ENCODE measurements at regions of chr20 and their contacts with region 1.

Region 1: GRCh38 chr20:56343861-56344381 is 14.9 kb upstream of the FAM210B start:
- DNase-seq: peak; percentile 79 to 98
- H3K4me3 ChIP-seq: peak overlapping the region in 3 of 4 experiments; percentile 40 to 52 (median 48); a peak in 7 of 8 replicates
- H3K27ac ChIP-seq: no peak overlapping the region
- H3K4me1 ChIP-seq: peaks cover 0 to 6% (median 3%) of the 10 kb centered on the region in 4 experiments; a peak in 4 of 7 replicates
- H3K27me3 ChIP-seq: peaks cover 8 to 35% (median 25%) of the 10 kb centered on the region in 4 experiments
- CTCF ChIP-seq: peak; percentile 88 to 92 (median 90)
- EP300 ChIP-seq: 0 out of 3 replicates have a peak, but pooled peaks of 1 of the 2 experiments have one; percentile 26
- POLR2A ChIP-seq: no peak
- RAD21 ChIP-seq: peak; percentile 95 to 96

Region 2: GRCh38 chr20:56187534-56188198 is 156.3 kb before region 1 on chr20:
- CTCF ChIA-PET with region 1: interaction called, 10 read pairs
- POLR2A ChIA-PET with region 1: no interaction called
- DNase-seq: peak in 1 of 2 experiments; percentile 56
- H3K4me3 ChIP-seq: no peak overlapping the region
- H3K27ac ChIP-seq: no peak overlapping the region
- H3K4me1 ChIP-seq: no peaks in the 10 kb centered on the region
- H3K27me3 ChIP-seq: no peaks in the 10 kb centered on the region
- CTCF ChIP-seq: peak in 2 of 3 experiments; percentile 19 to 50; a peak in 1 of 4 replicates
- EP300 ChIP-seq: no peak
- POLR2A ChIP-seq: no peak
- RAD21 ChIP-seq: peak; percentile 29 to 57; a peak in 3 of 4 replicates

Region 3: DNA sequence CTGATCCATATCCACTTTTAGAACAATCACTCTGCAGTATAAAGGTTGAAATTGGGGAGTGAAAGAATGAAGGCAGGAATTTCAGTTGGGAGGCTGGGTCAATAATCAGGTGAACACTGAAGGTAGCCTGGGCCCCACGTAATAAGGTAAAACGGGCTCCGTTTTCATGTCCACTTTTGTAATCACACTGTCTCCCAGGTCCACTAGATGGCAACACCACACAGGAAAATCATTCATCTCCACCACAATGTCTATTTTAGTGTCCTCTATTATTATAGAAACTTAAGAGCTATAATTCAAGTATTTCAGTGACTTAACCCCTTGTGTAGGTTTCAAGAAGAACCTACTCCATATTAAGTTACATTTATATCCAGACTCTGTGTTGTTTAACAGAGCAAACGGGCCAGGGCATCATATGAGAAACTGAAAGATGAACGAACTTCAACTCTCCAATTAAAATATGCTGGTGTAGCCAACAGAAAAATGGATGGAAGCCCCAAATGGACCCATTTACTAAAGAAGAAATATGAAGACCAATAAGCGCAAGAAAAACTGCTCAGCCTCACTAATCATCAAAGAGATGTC is 141.3 kb before region 1 on chr20:
- CTCF ChIA-PET with region 1: interaction called, 15 read pairs
- POLR2A ChIA-PET with region 1: no interaction called
- DNase-seq: no peak
- H3K4me3 ChIP-seq: no peak overlapping the region
- H3K27ac ChIP-seq: no peak overlapping the region
- H3K4me1 ChIP-seq: no peaks in the 10 kb centered on the region; a peak in 1 of 7 replicates
- H3K27me3 ChIP-seq: no peaks in the 10 kb centered on the region
- CTCF ChIP-seq: peak in 2 of 3 experiments; percentile 28 to 36; a peak in 2 of 4 replicates
- EP300 ChIP-seq: no peak
- POLR2A ChIP-seq: no peak
- RAD21 ChIP-seq: peak; percentile 45 to 57

Region 4: DNA sequence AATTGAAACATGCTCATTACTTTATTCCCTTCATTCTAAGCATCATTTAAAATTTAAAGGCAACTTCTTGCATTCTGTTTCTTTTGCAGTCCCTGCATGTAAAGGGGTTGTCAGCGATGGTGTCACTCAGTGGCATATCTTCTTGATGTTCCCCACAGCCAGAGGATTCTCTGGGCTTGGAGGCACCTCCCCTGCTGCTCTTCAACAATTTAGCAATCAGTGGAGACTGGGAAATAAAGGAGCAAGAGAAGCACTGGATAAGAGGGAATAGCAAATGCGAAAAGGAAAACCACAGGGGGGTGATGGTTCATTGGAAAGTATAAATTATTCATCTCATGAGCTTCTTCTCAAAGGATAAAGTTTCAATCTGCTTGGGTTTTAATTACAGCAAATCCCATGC is 126.1 kb before region 1 on chr20:
- CTCF ChIA-PET with region 1: interaction called, 10 read pairs
- POLR2A ChIA-PET with region 1: no interaction called
- DNase-seq: no peak
- H3K4me3 ChIP-seq: no peak overlapping the region
- H3K27ac ChIP-seq: no peak overlapping the region
- H3K4me1 ChIP-seq: no peaks in the 10 kb centered on the region
- H3K27me3 ChIP-seq: no peaks in the 10 kb centered on the region
- CTCF ChIP-seq: no peak
- EP300 ChIP-seq: no peak
- POLR2A ChIP-seq: no peak
- RAD21 ChIP-seq: no peak

Region 5: DNA sequence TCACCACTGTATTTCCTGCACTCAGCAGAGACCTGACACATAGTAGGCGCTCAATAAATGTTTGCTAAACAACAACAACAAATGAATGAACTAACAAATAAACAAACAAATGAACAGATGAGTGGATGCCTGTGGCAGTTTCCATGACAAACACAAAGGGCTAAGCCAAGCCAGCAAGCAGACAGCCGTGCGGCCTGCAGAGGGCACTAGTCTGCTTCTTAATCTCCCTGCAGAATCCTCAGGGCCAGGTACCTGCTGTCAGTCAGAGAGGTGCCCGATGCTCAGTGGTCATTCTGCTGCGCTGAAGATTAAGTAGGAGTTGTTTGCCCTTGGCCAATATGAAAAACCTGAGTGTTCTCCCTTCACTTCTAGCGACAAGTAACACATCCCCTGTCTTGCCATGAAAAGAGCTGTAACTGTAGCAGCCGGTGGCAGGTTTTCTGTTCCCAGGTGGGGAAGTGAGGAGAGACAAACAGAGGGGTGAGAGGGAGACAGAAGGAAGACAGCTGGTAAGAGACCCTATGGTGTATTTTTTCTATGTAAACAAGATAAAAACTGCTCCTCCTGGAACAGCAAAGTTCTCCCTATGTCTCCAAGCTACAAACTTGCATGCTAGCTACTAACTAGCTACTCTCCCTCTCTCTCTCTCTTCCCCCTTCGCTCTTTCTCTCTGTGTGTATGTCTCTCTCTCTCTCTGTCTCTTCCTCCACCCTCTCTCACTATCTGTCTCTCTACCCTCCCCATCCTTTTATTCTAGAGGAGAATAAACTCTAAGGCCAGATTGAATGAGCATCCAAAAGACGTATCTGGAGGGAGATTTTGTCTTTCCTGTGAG is 95.8 kb before region 1 on chr20 and contains the start of gene MC3R:
- CTCF ChIA-PET with region 1: interaction called, 15 read pairs
- POLR2A ChIA-PET with region 1: no interaction called
- DNase-seq: peak; percentile 27 to 74
- H3K4me3 ChIP-seq: no peak within 1 kb of the TSS
- H3K27ac ChIP-seq: no peak within 1 kb of the TSS
- H3K4me1 ChIP-seq: no peaks in the 10 kb centered on the region
- H3K27me3 ChIP-seq: peaks cover 0 to 16% (median 7%) of the 10 kb centered on the region in 4 experiments; a peak in 3 of 7 replicates
- CTCF ChIP-seq: peak; percentile 68 to 89 (median 83)
- EP300 ChIP-seq: no peak
- POLR2A ChIP-seq: no peak
- RAD21 ChIP-seq: peak; percentile 59 to 62
- total RNA-seq, gene MC3R: not detected in 2 replicates

Region 6: GRCh38 chr20:56358596-56359211 is 14.8 kb after region 1 on chr20 and contains the start of gene FAM210B:
- CTCF ChIA-PET with region 1: interaction called, 20 read pairs
- POLR2A ChIA-PET with region 1: no interaction called
- DNase-seq: peak; percentile 72 to 84
- H3K4me3 ChIP-seq: peak within 1 kb of the TSS; percentile 65 to 94 (median 73)
- H3K27ac ChIP-seq: no peak within 1 kb of the TSS
- H3K4me1 ChIP-seq: peaks cover 4 to 11% (median 6%) of the 10 kb centered on the region in 4 experiments
- H3K27me3 ChIP-seq: peaks cover 0 to 11% (median 8%) of the 10 kb centered on the region in 4 experiments; a peak in 4 of 7 replicates
- CTCF ChIP-seq: no peak
- EP300 ChIP-seq: no peak
- POLR2A ChIP-seq: no peak
- RAD21 ChIP-seq: no peak
- total RNA-seq, gene FAM210B: 15.0 and 15.1 TPM in 2 replicates

Region 7: DNA sequence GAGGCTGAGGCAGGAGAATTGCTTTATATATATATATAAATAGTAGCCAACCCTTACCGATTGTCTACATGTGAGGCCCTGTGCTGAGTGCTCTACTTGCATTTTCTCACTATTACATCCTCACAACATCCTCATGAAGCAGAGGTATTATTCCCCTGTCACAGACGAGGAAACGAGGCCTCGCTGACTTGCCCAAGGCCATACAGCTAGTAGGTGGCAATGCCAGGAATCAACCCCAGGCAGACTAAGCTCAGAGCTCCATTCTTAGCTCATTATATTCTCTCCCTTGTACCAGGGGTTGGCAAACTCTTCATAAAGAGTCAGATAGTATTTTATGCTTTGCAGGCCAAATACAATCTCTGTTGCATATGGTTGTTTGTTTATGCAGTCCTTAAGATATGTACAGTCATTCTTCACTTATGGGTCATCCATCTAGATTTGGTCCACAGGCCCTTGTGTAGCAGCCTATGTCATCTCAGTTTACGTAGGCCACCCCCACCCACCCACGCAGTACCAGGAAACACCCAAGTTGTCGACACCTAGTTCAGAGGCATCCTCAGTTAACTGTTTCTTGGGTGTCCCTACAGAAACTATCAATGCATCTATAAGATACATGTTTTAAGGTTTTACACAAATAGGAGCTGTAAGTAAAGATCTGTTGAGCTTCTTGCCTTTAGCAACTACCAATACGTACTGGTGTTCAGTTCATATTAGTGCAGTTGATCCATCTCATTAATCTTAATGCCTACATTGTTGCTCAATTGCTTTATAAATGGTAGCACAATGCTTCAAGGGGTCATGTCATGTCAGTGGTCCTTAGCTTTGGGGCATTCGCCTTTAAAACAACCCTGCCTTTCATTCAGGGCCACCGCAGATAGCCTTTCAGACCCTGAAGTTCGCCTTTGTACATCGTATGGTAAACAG is 71.2 kb after region 1 on chr20:
- CTCF ChIA-PET with region 1: no interaction called
- POLR2A ChIA-PET with region 1: no interaction called
- DNase-seq: no peak
- H3K4me3 ChIP-seq: no peak overlapping the region
- H3K27ac ChIP-seq: no peak overlapping the region
- H3K4me1 ChIP-seq: no peaks in the 10 kb centered on the region
- H3K27me3 ChIP-seq: no peaks in the 10 kb centered on the region
- CTCF ChIP-seq: no peak
- EP300 ChIP-seq: no peak
- POLR2A ChIP-seq: no peak
- RAD21 ChIP-seq: no peak

Region 8: GRCh38 chr20:56691325-56691998 is 347.5 kb after region 1 on chr20:
- CTCF ChIA-PET with region 1: no interaction called
- POLR2A ChIA-PET with region 1: no interaction called
- DNase-seq: no peak
- H3K4me3 ChIP-seq: no peak overlapping the region
- H3K27ac ChIP-seq: no peak overlapping the region
- H3K4me1 ChIP-seq: peaks cover 5 to 12% (median 9%) of the 10 kb centered on the region in 4 experiments
- H3K27me3 ChIP-seq: no peaks in the 10 kb centered on the region
- CTCF ChIP-seq: no peak
- EP300 ChIP-seq: no peak
- POLR2A ChIP-seq: no peak
- RAD21 ChIP-seq: no peak